ENCODE measurements at regions of chr15 and their contacts with region 1.

Region 1: GRCh38 chr15:97903971-97904572 is 56.4 kb upstream of the ARRDC4 start:
- DNase-seq: peak; percentile 77
- H3K4me3 ChIP-seq: peak overlapping the region in 1 of 4 donors; percentile 11
- H3K27ac ChIP-seq: no peak overlapping the region
- H3K4me1 ChIP-seq: peaks cover 0 to 9% (median 6%) of the 10 kb centered on the region in 4 donors
- H3K27me3 ChIP-seq: peaks cover 11% of the 10 kb centered on the region
- CTCF ChIP-seq: peak; percentile 63 to 76 (median 75)
- EP300 ChIP-seq: no peak
- POLR2A ChIP-seq: no peak

Region 2: GRCh38 chr15:96657096-96657495 is 1247.0 kb before region 1 on chr15:
- in situ Hi-C with region 1: no loop called
- intact Hi-C with region 1: no loop called
- DNase-seq: no peak
- H3K4me3 ChIP-seq: no peak overlapping the region
- H3K27ac ChIP-seq: no peak overlapping the region
- H3K4me1 ChIP-seq: no peaks in the 10 kb centered on the region
- H3K27me3 ChIP-seq: no peaks in the 10 kb centered on the region
- CTCF ChIP-seq: no peak
- EP300 ChIP-seq: no peak
- POLR2A ChIP-seq: no peak

Region 3: DNA sequence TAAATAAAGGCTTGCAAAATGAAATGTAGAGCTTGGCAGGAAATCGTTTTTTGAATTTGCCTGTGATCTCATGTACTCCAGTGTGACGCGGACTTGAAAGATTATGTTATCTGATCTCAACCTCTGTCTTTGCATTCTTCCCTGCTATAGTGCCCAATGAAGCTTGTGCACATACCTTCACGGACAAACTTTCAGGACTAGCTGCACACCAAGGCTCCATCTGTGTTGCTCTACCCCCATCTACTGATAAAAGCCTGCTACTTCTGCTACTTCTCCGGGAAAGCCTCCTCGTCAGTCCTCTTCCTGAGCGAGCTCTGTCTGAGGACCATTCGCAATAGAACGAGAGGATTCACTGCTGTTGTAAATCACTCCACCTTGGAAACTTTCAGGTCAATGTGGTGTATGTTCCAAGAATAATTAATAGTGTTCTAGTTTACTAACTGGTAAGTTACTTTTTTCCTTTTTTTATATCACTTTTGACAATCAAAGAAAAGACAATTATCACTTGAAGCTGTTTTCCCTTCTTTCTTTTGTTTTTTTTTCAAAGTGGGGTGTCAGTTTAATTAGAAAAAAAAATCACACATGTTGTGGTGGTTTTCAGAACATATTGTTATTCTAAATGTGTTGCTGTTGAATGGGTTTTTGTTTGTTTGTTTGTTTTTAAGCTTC is 274.0 kb after region 1 on chr15:
- in situ Hi-C with region 1: loop called (anchors 5 to 25 kb)
- intact Hi-C with region 1: loop called (anchors 5 kb)
- DNase-seq: peak; percentile 29
- H3K4me3 ChIP-seq: no peak overlapping the region
- H3K27ac ChIP-seq: no peak overlapping the region
- H3K4me1 ChIP-seq: peaks cover 0 to 5% (median 2%) of the 10 kb centered on the region in 4 donors
- H3K27me3 ChIP-seq: peaks cover 44% of the 10 kb centered on the region
- CTCF ChIP-seq: peak; percentile 63 to 79 (median 67)
- EP300 ChIP-seq: no peak
- POLR2A ChIP-seq: no peak